ENCODE measurements at regions of chr1 and their contacts with region 1.

Region 1: GRCh38 chr1:241860922-241861321 is 12.9 kb downstream of the EXO1 start:
- DNase-seq: no peak
- H3K4me3 Mint-ChIP-seq: no peak overlapping the region
- H3K27ac Mint-ChIP-seq: no peak overlapping the region
- H3K4me1 Mint-ChIP-seq: no peaks in the 10 kb centered on the region
- H3K27me3 Mint-ChIP-seq: no peaks in the 10 kb centered on the region
- CTCF ChIP-seq: no peak

Region 2: DNA sequence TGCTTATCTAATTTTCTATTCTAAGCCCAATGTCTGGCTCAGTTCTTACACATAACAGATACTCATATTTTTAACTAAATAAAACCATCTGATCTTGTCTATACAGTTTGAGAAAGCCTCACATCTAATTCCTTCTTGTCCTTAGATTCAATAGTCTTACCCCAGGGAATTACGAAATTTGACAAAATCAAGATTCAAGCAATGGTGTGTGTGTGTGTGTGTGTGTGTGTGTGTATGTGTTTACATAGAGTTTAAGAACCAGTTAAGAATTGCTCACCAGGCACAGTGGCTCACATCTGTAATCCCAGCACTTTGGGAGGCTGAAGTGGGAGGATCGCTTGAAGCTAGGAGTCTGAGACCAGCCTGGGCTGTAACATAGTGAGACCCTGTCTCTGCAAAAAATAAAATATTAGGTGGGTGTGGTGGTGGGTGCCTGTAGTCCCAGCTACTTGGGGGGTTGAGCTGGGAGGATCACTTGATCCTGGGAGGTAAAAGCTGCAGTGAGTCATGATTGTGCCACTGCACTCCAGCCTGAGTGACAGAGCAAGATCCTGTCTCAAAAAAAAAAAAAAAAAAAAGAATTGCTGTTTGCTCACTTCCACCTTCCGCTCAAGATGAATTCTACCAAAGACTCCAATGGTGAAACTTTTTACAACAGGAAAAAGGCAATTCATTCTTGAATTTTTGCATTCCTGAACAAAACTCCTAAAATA is 202.7 kb before region 1 on chr1:
- CTCF ChIA-PET with region 1: no interaction called
- POLR2A ChIA-PET with region 1: no interaction called
- intact Hi-C with region 1: no loop called
- DNase-seq: peak; percentile 49
- H3K4me3 Mint-ChIP-seq: no peak overlapping the region
- H3K27ac Mint-ChIP-seq: no peak overlapping the region
- H3K4me1 Mint-ChIP-seq: peaks cover 8% of the 10 kb centered on the region
- H3K27me3 Mint-ChIP-seq: no peaks in the 10 kb centered on the region
- CTCF ChIP-seq: no peak

Region 3: GRCh38 chr1:241749901-241750695 is 110.8 kb before region 1 on chr1:
- CTCF ChIA-PET with region 1: no interaction called
- POLR2A ChIA-PET with region 1: no interaction called
- intact Hi-C with region 1: no loop called
- DNase-seq: no peak
- H3K4me3 Mint-ChIP-seq: peak overlapping the region; percentile 72
- H3K27ac Mint-ChIP-seq: peak overlapping the region; percentile 81
- H3K4me1 Mint-ChIP-seq: peaks cover 16% of the 10 kb centered on the region
- H3K27me3 Mint-ChIP-seq: no peaks in the 10 kb centered on the region
- CTCF ChIP-seq: no peak

Region 4: GRCh38 chr1:241847796-241848685 is 12.9 kb before region 1 on chr1 and contains the start of gene EXO1:
- CTCF ChIA-PET with region 1: interaction called, 13 read pairs
- POLR2A ChIA-PET with region 1: interaction called, 5 read pairs
- intact Hi-C with region 1: no loop called
- DNase-seq: peak; percentile 98
- H3K4me3 Mint-ChIP-seq: peak within 1 kb of the TSS; percentile 95
- H3K27ac Mint-ChIP-seq: peak within 1 kb of the TSS; percentile 81
- H3K4me1 Mint-ChIP-seq: peaks cover 18% of the 10 kb centered on the region
- H3K27me3 Mint-ChIP-seq: no peaks in the 10 kb centered on the region
- CTCF ChIP-seq: peak; percentile 38
- total RNA-seq, gene EXO1: 7.3 and 17.5 TPM in 2 replicates

Measured in MCF 10A (cell line).